ENCODE measurements at regions of chr15 and their contacts with region 1.

Region 1: DNA sequence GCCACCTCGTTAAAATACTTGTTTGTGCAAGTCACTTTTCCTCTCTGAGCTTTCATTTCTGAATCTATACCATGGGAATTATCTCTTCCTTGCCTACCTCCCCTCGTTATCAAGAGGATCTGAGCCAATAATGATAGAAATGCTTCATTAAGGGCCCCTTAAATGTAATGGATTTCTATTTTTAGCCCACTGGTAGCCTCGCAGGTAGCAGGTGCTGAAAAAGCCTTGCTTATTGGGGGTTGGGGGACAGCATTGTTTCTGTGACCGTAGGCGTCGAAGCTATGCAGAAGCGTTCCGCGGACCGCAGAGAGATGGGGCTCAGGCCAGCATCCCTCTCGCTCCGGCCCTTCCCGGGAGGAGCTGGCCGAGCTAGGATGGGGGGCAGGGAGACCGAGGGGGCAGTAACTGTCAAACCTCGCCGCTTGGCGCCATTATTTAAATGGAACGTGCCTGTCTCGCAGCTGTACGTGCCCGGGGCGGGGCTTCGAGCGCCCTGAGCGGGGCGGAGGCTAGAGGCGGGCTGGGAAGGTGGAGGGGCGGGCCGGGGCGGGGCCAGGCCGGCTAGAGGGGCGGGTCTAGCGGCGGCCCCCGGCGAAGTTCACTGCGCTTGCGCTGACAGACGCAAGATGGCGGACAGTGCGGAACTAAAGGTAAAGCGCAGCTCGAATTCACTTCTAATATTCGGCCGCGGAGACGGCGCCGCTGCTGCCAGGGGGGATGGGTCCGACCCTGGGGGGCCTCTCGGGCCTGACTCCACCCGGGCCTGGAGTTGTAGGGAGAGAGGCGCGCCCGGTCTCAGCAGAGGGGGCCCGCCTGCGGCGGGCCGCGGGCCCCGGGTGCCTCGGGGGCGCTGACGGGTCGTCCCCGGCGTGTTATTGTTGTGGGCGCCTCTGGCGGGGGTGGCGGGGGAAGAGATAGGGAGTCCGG is at the start of gene PIAS1:
- DNase-seq: peak; percentile 95
- H3K4me3 Mint-ChIP-seq: peak within 1 kb of the TSS; percentile 86
- H3K27ac Mint-ChIP-seq: peak within 1 kb of the TSS; percentile 89
- H3K4me1 Mint-ChIP-seq: peaks cover 36% of the 10 kb centered on the region
- H3K27me3 Mint-ChIP-seq: peaks cover 11% of the 10 kb centered on the region
- total RNA-seq, gene PIAS1: 29.8 to 33.4 TPM

Region 2: GRCh38 chr15:67254238-67255175 is 799.5 kb before region 1 on chr15 and contains the starts of genes AAGAB and IQCH:
- CTCF ChIA-PET with region 1: no interaction called
- intact Hi-C with region 1: loop called (anchors 10 kb)
- DNase-seq: peak; percentile 97
- H3K4me3 Mint-ChIP-seq: peak within 1 kb of the TSS; percentile 100
- H3K27ac Mint-ChIP-seq: peak within 1 kb of the TSS; percentile 96
- H3K4me1 Mint-ChIP-seq: peaks cover 38% of the 10 kb centered on the region
- H3K27me3 Mint-ChIP-seq: no peaks in the 10 kb centered on the region
- total RNA-seq, gene AAGAB: 47.2 to 48.8 TPM
- total RNA-seq, gene IQCH: 0.98 to 1.4 TPM

Region 3: GRCh38 chr15:67863442-67863987 is 190.4 kb before region 1 on chr15:
- CTCF ChIA-PET with region 1: interaction called, 3 read pairs
- intact Hi-C with region 1: loop called (anchors 5 kb)
- DNase-seq: peak; percentile 76
- H3K4me3 Mint-ChIP-seq: no peak overlapping the region
- H3K27ac Mint-ChIP-seq: no peak overlapping the region
- H3K4me1 Mint-ChIP-seq: peaks cover 3% of the 10 kb centered on the region
- H3K27me3 Mint-ChIP-seq: peaks cover 10% of the 10 kb centered on the region

Region 4: GRCh38 chr15:68075764-68076385 is 21.9 kb after region 1 on chr15:
- CTCF ChIA-PET with region 1: no interaction called
- intact Hi-C with region 1: no loop called
- DNase-seq: no peak
- H3K4me3 Mint-ChIP-seq: no peak overlapping the region
- H3K27ac Mint-ChIP-seq: no peak overlapping the region
- H3K4me1 Mint-ChIP-seq: peaks cover 62% of the 10 kb centered on the region
- H3K27me3 Mint-ChIP-seq: no peaks in the 10 kb centered on the region

Region 5: GRCh38 chr15:68114356-68114755 is 60.4 kb after region 1 on chr15:
- CTCF ChIA-PET with region 1: no interaction called
- intact Hi-C with region 1: loop called (anchors 5 kb)
- DNase-seq: no peak
- H3K4me3 Mint-ChIP-seq: peak overlapping the region; percentile 9
- H3K27ac Mint-ChIP-seq: no peak overlapping the region
- H3K4me1 Mint-ChIP-seq: peaks cover 69% of the 10 kb centered on the region
- H3K27me3 Mint-ChIP-seq: no peaks in the 10 kb centered on the region

Region 6: DNA sequence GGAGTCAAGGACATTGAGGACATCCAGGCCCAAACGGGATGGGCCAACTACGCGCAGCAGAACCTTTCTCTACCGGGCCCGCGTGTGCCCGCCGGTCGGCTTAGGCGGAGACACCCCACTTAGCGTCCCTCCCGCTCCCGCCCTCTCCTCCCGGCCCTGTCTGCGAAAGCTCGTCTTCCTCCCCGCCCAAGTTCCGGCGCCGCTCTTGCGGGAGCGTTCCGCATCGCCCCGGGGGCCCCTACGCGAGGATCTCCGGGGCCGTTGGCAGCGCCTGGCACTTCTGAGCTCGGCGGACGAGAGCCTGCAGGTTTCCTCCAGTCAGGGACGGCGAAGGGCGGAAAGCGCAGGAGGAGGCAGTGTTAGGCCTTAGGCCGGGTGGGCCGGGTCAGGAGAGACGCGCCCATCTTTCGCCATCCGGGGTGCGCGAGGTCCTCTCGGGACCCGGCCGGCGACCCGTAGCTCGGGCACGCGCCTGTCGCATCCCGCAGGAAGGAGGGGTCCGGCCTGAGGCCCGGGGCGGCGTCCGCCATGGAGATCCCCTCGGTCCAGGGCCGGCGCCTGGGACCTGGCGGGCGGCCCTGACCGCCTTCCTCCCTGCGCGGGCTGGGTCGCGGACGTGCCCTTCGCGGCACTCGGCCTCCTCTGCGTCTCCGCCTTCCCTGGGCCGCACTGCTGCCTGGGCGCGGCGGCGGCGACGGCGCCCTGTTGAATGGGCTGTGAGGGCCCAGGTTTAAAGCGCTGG is 223.8 kb after region 1 on chr15 and contains the start of gene FEM1B:
- CTCF ChIA-PET with region 1: no interaction called
- intact Hi-C with region 1: loop called (anchors 1 kb)
- DNase-seq: peak; percentile 89
- H3K4me3 Mint-ChIP-seq: peak within 1 kb of the TSS; percentile 97
- H3K27ac Mint-ChIP-seq: peak within 1 kb of the TSS; percentile 97
- H3K4me1 Mint-ChIP-seq: peaks cover 46% of the 10 kb centered on the region
- H3K27me3 Mint-ChIP-seq: no peaks in the 10 kb centered on the region
- total RNA-seq, gene FEM1B: 30.3 to 34.2 TPM

Region 7: DNA sequence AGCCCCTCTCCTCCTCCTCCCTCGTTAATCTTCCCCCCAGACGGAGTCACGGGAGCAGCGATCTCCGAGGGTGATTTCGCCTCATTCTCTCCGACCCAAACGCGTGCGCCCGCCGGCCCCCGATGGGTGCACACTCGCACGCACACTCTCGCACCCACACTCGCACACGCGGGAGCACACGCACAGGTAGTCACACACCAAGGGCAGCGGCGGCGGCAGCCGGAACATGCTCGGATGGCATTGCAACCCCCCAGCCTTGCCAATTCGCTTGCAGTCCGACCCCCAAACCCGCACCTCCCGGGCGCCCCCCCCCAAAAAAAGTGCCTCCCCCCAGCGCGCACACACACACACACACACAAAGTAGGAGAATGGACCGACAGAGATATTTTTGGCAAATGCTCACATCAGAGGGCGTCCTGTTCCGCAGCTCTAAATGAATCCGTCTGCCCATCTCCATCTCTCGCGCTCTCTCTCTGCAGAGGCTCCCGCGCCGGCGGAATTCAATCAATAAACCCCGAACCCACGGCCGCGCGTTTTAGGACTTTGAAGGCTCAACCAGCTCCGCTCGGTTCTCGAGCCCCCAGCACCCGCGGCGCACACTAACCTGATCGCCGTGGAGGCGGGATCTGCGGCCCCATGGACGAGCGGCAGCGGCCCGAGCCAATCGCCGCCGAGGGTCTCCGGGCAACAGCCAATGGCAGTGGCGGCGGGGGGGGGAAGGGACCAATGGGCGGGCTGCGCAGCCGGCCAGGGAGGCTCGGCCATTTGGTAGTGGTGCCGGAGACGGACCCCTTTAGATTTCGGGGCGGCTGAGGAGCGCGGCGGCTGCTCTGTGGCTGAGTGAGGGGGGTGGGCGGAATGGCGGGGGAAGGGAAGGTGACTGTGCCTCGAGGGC is 766.6 kb after region 1 on chr15 and contains the start of gene ANP32A:
- CTCF ChIA-PET with region 1: no interaction called
- intact Hi-C with region 1: loop called (anchors 5 kb)
- DNase-seq: peak; percentile 95
- H3K4me3 Mint-ChIP-seq: peak within 1 kb of the TSS; percentile 84
- H3K27ac Mint-ChIP-seq: peak within 1 kb of the TSS; percentile 94
- H3K4me1 Mint-ChIP-seq: peaks cover 31% of the 10 kb centered on the region
- H3K27me3 Mint-ChIP-seq: no peaks in the 10 kb centered on the region
- total RNA-seq, gene ANP32A: 216 to 245 TPM

Region 8: DNA sequence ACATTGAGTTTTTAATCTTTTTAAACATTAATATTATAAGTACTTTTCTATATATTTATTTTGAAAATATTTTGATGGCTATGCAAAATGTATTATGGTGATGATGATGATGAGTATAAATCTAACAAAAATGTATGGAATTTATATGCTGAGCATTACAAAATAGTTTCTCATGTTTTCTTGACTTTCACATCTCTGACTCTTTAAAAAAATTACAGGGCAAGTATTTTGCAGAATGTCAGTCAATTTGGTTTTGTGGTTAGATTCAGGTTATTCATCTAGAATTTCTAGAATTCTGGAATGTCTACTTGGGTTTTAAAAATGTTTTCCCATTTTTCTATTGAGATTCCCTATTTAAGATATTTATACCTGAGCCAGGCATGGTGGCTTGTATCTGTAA is 808.5 kb after region 1 on chr15:
- CTCF ChIA-PET with region 1: no interaction called
- intact Hi-C with region 1: no loop called
- DNase-seq: no peak
- H3K4me3 Mint-ChIP-seq: no peak overlapping the region
- H3K27ac Mint-ChIP-seq: no peak overlapping the region
- H3K4me1 Mint-ChIP-seq: no peaks in the 10 kb centered on the region
- H3K27me3 Mint-ChIP-seq: peaks cover 5% of the 10 kb centered on the region